CD8-positive, alpha-beta memory T cell (primary cell): ENCODE measurements at regions of chr21 and their contacts with region 1.

Region 1: DNA sequence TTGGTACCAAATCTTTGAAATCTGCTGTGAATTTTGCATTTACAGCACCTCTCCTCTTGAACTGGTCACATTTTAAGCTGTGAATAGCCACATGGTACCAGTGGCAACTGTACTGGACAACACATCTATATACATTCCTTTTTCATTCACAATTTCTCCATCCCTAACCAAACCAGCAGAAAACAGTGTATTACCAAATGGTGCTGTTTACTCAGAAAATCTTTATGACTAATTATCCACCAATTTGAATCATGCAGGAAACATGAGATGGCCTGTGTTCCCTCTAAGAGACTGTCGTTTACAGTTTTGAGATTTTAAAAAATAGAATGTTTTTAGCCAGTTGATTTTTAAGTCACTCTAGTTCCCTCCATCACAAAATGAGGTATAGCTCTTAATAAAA is 17.6 kb upstream of the CCT8 start:
- DNase-seq: no peak
- H3K4me3 ChIP-seq: no peak overlapping the region
- H3K4me3 Mint-ChIP-seq: no peak overlapping the region
- H3K27ac ChIP-seq: no peak overlapping the region
- H3K27ac Mint-ChIP-seq: no peak overlapping the region
- H3K4me1 ChIP-seq: no peaks in the 10 kb centered on the region
- H3K4me1 Mint-ChIP-seq: no peaks in the 10 kb centered on the region
- H3K27me3 ChIP-seq: no peaks in the 10 kb centered on the region
- H3K27me3 Mint-ChIP-seq: peaks cover 0 to 8% of the 10 kb centered on the region in 2 donors

Region 2: GRCh38 chr21:29372063-29372802 is 281.2 kb after region 1 on chr21:
- CTCF ChIA-PET with region 1: interaction called, 20 read pairs
- POLR2A ChIA-PET with region 1: no interaction called
- DNase-seq: peak; percentile 3 to 66 (median 59)
- H3K4me3 ChIP-seq: no peak overlapping the region
- H3K4me3 Mint-ChIP-seq: no peak overlapping the region
- H3K27ac ChIP-seq: no peak overlapping the region
- H3K27ac Mint-ChIP-seq: peak overlapping the region in 3 of 8 donors; percentile 39 to 68 (median 57)
- H3K4me1 ChIP-seq: peaks cover 8% of the 10 kb centered on the region
- H3K4me1 Mint-ChIP-seq: peaks cover 9 to 17% (median 10%) of the 10 kb centered on the region in 3 donors
- H3K27me3 ChIP-seq: no peaks in the 10 kb centered on the region
- H3K27me3 Mint-ChIP-seq: no peaks in the 10 kb centered on the region